ENCODE measurements at regions of chr4 and their contacts with region 1.

Region 1: GRCh38 chr4:83012687-83013419 is 2.2 kb upstream of the LIN54 start:
- DNase-seq: peak; percentile 97
- ATAC-seq: peak; percentile 93
- H3K4me3 Mint-ChIP-seq: peak overlapping the region; percentile 78
- H3K27ac Mint-ChIP-seq: peak overlapping the region; percentile 94
- H3K4me1 Mint-ChIP-seq: peaks cover 31% of the 10 kb centered on the region
- H3K27me3 Mint-ChIP-seq: peaks cover 13% of the 10 kb centered on the region
- CTCF ChIP-seq: no peak; the same call in 1 of the 2 replicates

Region 2: GRCh38 chr4:82373816-82374625 is 638.8 kb before region 1 on chr4 and contains the start of gene HNRNPD:
- CTCF ChIA-PET with region 1: no interaction called
- POLR2A ChIA-PET with region 1: interaction called, 11 read pairs
- DNase-seq: peak; percentile 97
- ATAC-seq: peak; percentile 92
- H3K4me3 Mint-ChIP-seq: peak within 1 kb of the TSS; percentile 98
- H3K27ac Mint-ChIP-seq: peak within 1 kb of the TSS; percentile 100
- H3K4me1 Mint-ChIP-seq: peaks cover 34% of the 10 kb centered on the region
- H3K27me3 Mint-ChIP-seq: no peaks in the 10 kb centered on the region
- CTCF ChIP-seq: no peak
- total RNA-seq, gene HNRNPD: 493 to 580 TPM (median 496 TPM) in 3 replicates

Region 3: DNA sequence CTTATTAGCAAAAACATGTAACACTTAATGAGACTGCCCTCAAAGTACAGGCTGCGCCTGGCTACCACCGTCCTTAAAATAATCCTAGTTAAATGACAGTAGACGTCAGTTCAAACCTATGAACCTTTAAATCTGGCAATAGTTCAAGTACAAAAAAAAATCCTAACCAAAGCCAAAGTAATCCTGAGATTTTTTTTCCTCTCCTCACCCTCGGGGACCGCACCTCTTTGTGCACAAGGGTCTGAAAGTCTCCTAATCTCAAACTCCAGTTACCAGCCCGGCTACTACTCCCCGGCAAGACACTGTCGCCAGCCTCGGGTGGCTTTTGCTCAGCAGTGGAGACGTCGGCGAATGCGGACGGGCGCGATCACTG is 122.3 kb before region 1 on chr4:
- CTCF ChIA-PET with region 1: no interaction called
- POLR2A ChIA-PET with region 1: no interaction called
- DNase-seq: no peak
- ATAC-seq: no peak
- H3K4me3 Mint-ChIP-seq: peak overlapping the region; percentile 93
- H3K27ac Mint-ChIP-seq: peak overlapping the region; percentile 100
- H3K4me1 Mint-ChIP-seq: peaks cover 33% of the 10 kb centered on the region
- H3K27me3 Mint-ChIP-seq: no peaks in the 10 kb centered on the region
- CTCF ChIP-seq: no peak

Region 4: DNA sequence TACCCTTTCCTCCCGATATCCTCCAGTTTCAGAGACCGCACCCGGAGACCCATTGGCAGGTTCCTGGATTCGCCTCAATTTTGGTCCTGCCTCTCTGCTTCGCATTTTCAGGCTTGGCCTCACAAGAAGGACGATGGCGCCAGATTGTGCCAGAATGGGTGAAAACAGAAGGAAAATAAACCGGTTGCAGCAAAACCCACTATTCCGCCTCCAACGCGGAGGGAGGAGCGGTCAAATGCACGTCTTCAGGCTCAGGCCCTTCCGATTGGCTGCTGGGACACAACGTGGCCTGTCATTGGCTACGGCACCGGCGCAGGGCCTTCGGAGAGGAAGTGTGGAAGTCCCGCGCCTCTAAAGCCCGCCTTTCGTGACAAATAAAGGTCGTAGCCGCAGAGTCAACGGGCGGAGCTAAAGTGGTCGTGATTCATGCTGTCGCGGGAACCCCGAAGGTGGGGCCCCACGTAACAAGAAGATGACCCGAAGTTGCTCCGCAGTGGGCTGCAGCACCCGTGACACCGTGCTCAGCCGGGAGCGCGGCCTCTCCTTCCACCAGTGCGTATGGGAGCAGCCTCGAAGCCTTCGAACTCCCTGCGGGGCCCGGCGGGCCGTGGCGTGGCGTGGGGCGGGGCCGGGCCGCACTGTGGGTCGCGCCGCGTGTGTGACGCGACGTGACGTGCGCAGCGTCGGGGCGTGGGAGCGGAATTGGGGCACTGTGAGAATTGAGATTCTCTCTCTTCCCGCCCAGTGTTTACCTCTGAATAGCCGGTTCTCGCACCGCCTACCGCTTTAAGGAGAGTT is 112.3 kb before region 1 on chr4 and contains the start of gene THAP9:
- CTCF ChIA-PET with region 1: interaction called, 5 read pairs
- POLR2A ChIA-PET with region 1: interaction called, 10 read pairs
- DNase-seq: peak; percentile 96
- ATAC-seq: peak; percentile 99
- H3K4me3 Mint-ChIP-seq: no peak within 1 kb of the TSS
- H3K27ac Mint-ChIP-seq: no peak within 1 kb of the TSS
- H3K4me1 Mint-ChIP-seq: peaks cover 17% of the 10 kb centered on the region
- H3K27me3 Mint-ChIP-seq: no peaks in the 10 kb centered on the region
- CTCF ChIP-seq: no peak
- total RNA-seq, gene THAP9: 16.8 to 17.7 TPM (median 17.0 TPM) in 3 replicates

Region 5: GRCh38 chr4:83034630-83035494 is 22.0 kb after region 1 on chr4 and contains the start of gene COPS4:
- CTCF ChIA-PET with region 1: interaction called, 14 read pairs
- POLR2A ChIA-PET with region 1: interaction called, 28 read pairs
- DNase-seq: peak; percentile 95
- ATAC-seq: peak; percentile 100
- H3K4me3 Mint-ChIP-seq: peak within 1 kb of the TSS; percentile 100
- H3K27ac Mint-ChIP-seq: peak within 1 kb of the TSS; percentile 100
- H3K4me1 Mint-ChIP-seq: peaks cover 10% of the 10 kb centered on the region
- H3K27me3 Mint-ChIP-seq: peaks cover 18% of the 10 kb centered on the region
- CTCF ChIP-seq: no peak
- total RNA-seq, gene COPS4: 26.9 to 30.9 TPM (median 28.7 TPM) in 3 replicates

Region 6: DNA sequence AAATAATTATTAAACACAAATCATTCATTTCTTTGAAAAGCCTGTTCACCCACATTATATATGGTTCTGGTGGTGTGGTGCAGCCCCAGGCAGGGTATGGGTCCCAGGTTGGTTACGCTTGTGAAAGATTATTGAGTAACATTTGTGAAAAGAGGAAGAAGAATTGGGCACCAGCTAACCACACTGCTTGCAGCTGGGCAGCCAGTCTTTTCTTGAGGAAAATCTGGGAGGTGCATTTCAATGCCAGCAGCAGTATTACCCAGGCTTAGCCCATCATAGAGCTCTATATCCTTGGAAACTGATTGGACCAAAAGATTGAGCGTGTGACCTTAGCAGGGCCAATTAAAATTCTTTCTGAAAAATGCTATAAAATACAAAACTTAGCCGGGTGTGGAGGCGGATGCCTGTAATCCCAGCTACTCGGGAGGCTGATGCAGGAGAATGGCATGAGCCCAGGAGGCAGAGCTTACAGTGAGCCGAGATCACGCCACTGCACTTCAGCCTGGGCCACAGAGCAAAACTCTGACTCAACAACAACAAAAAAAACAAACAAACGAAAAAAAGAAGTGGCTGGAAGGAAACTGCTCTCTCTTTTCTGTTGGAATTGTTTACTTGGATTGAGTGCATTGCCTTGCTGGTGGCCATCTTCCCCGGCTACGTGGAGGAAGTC is 111.4 kb after region 1 on chr4:
- CTCF ChIA-PET with region 1: no interaction called
- POLR2A ChIA-PET with region 1: no interaction called
- DNase-seq: no peak
- ATAC-seq: no peak
- H3K4me3 Mint-ChIP-seq: no peak overlapping the region
- H3K27ac Mint-ChIP-seq: no peak overlapping the region
- H3K4me1 Mint-ChIP-seq: no peaks in the 10 kb centered on the region
- H3K27me3 Mint-ChIP-seq: no peaks in the 10 kb centered on the region
- CTCF ChIP-seq: no peak

Measured in WTC11 (cell line).